ENCODE measurements at regions of chr2 and their contacts with region 1.

Region 1: GRCh38 chr2:175366815-175367214 is 185.3 kb upstream of the ATP5MC3 start:
- ATAC-seq: peak; percentile 77 to 98 (median 90)
- H3K4me3 ChIP-seq: no peak overlapping the region
- H3K27ac ChIP-seq: no peak overlapping the region
- H3K4me1 ChIP-seq: peaks cover 5 to 14% of the 10 kb centered on the region in 2 donors

Region 2: GRCh38 chr2:174914853-174915760 is 451.7 kb before region 1 on chr2:
- in situ Hi-C with region 1: no loop called
- ATAC-seq: peak in 1 of 8 experiments; percentile 39
- H3K4me3 ChIP-seq: no peak overlapping the region
- H3K27ac ChIP-seq: no peak overlapping the region
- H3K4me1 ChIP-seq: no peaks in the 10 kb centered on the region

Region 3: DNA sequence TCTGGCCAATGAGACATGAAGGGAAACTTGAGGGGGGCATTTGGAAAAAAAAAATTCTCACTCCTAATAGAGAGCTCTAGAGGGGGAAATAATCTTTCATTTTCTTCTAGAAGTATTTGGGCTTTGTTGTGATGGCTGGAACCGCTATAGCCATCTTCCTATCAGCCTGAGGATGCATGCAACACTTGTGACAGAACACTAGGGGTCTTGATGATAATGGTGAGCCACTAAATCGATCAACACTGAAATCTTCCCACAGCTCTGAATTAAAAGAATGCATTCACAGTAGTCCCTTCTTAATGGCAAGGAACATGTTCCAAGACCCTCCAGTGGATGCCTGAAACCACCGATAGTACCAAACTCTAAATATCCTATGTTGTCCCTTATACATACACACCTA is 310.0 kb after region 1 on chr2:
- in situ Hi-C with region 1: loop called in 3 of 9 experiments (anchors 10 to 25 kb)
- ATAC-seq: no peak
- H3K4me3 ChIP-seq: no peak overlapping the region
- H3K27ac ChIP-seq: no peak overlapping the region
- H3K4me1 ChIP-seq: no peaks in the 10 kb centered on the region

Region 4: DNA sequence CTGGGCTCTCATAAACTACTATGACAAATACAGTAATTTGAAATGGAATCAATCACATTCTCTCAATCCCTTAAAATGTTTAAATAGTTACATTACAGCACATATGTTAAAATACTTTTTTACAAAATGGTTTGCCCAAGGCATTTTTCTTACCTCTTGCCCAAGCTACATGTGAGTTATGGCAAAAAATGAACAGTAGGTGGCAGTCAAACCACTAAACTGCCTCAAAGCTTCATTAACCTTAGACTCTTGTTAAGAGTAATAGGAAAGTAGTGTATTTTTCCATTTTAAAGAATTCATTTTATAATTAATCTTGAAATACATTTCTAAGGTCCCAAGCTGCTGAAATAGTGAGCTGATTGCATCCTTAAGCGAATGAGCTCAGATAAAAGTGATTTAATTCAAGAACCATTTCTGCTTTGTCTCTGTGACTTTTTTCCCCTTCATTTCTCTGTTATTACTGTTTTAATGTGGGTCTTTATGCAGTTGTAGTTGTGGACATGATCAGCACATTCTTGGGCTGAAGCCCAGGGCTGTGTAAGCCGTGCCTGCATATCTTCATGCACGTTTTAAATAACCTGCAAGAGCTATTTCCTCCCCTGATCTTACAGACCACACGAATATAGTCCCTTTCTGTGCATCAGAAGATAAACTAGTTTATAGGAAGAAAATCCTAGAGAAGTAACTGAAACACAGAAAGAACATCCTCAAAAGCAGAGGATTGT is 323.5 kb after region 1 on chr2:
- in situ Hi-C with region 1: loop called in 2 of 9 experiments (anchors 25 kb)
- ATAC-seq: peak in 6 of 8 experiments; percentile 45 to 96 (median 74)
- H3K4me3 ChIP-seq: no peak overlapping the region
- H3K27ac ChIP-seq: no peak overlapping the region
- H3K4me1 ChIP-seq: peaks cover 0 to 27% of the 10 kb centered on the region in 2 donors

Region 5: DNA sequence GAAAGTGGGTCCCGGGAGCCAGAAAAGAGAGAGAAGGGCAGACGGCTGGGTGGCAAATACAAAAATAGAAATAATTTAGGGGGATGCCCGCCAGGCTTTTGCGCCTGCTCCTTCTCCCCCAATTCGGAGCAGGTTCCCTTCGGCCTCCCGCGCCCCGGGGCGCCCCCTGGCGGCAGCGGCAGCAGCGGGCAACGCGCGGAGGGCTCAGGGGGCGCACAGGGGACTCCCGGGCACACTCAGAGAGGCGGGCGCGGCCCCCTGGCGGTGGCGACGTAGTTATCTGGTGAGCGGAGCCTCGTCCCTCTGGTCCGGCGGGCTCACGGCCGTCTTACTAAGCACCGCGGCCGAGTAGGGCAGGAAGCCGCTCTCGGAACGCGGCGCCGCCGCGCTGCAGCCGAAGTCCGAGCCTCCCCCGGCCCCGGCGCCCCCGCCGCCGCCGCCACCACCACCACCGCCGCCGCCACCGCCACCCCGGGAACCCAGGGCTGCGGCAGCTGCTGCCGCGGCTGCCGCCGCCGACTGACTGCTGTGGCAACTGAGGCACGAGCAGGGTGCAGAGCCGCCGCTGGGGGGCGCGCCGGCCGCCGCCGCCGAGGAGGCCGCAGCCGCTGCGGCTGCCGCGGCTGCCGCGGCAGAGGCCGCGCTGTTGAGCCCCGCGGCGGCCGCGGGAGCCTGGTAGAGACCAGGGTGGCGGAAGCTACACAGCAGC is 713.2 kb after region 1 on chr2:
- in situ Hi-C with region 1: loop called (anchors 10 to 25 kb)
- ATAC-seq: peak; percentile 88 to 97 (median 93)
- H3K4me3 ChIP-seq: peak overlapping the region; percentile 25 to 36 (median 28)
- H3K27ac ChIP-seq: no peak overlapping the region
- H3K4me1 ChIP-seq: peaks cover 0 to 12% of the 10 kb centered on the region in 2 donors

Region 6: GRCh38 chr2:176088048-176088936 is 721.5 kb after region 1 on chr2:
- in situ Hi-C with region 1: loop called in 8 of 9 experiments (anchors 10 to 25 kb)
- ATAC-seq: peak; percentile 43 to 76 (median 64)
- H3K4me3 ChIP-seq: peak overlapping the region in 4 of 5 donors; percentile 12 to 30 (median 27)
- H3K27ac ChIP-seq: no peak overlapping the region
- H3K4me1 ChIP-seq: peaks cover 12 to 15% of the 10 kb centered on the region in 2 donors